ENCODE measurements at regions of chr18 and their contacts with region 1.

Region 1: DNA sequence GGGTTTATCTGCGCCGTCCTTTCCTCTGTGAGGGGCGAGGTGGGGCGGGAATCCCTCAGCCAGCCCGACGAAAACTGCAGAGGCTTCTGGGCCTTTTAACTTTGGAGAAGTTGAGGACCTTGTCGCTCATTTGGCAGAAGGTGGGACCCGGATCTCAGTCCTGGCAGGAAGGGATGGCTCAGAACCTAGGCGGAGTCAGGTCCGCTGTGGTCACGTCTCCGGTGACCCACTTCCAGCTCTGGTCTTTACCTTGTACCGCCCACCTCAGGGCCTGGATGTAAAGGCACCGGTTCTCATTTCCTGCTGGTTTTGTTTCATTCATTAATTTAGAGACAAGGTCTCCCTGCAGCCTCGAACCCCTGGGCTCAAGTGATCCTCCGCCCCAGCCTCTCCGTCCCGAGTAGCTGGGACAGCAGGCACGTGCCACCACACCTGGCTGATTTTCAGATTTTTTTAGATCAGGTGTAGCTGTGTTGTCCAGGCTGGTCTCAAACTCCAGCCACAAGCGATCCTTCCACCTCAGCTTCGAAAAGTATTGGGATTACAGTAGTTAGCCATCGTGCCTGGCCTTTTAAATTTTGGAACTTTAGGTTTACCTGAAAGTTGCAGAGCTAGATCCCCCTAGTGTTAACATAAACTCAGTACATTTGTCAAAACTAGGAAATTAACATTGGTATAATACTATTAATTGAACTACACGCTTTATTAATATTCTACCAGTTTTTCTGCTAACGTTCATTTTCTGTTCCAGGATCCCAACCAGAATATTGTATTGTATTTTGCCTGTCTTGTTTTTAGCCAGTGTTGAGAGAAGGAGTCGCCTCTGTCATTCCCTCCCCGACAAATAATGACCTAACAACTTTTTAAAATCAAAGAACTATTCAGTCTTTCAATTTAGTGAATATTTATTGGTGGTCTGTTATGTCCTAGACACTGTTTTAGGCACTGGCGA is 852 bp downstream of the POLI start:
- DNase-seq: no peak
- ATAC-seq: peak; percentile 27
- H3K4me3 Mint-ChIP-seq: peak overlapping the region; percentile 95
- H3K27ac Mint-ChIP-seq: peak overlapping the region; percentile 99
- H3K4me1 Mint-ChIP-seq: peaks cover 31% of the 10 kb centered on the region
- H3K27me3 Mint-ChIP-seq: no peaks in the 10 kb centered on the region
- CTCF ChIP-seq: peak; percentile 46

Region 2: GRCh38 chr18:54119524-54120019 is 150.6 kb before region 1 on chr18:
- CTCF ChIA-PET with region 1: interaction called, 11 read pairs
- POLR2A ChIA-PET with region 1: interaction called, 4 read pairs
- intact Hi-C with region 1: loop called (anchors 1 kb)
- DNase-seq: no peak
- ATAC-seq: peak; percentile 37
- H3K4me3 Mint-ChIP-seq: peak overlapping the region; percentile 65
- H3K27ac Mint-ChIP-seq: no peak overlapping the region
- H3K4me1 Mint-ChIP-seq: peaks cover 4% of the 10 kb centered on the region
- H3K27me3 Mint-ChIP-seq: peaks cover 17% of the 10 kb centered on the region
- CTCF ChIP-seq: peak; percentile 62

Region 3: GRCh38 chr18:54173980-54174630 is 96.1 kb before region 1 on chr18:
- CTCF ChIA-PET with region 1: interaction called, 5 read pairs
- POLR2A ChIA-PET with region 1: interaction called, 3 read pairs
- intact Hi-C with region 1: loop called (anchors 1 kb)
- DNase-seq: no peak
- ATAC-seq: no peak
- H3K4me3 Mint-ChIP-seq: no peak overlapping the region
- H3K27ac Mint-ChIP-seq: no peak overlapping the region
- H3K4me1 Mint-ChIP-seq: peaks cover 19% of the 10 kb centered on the region
- H3K27me3 Mint-ChIP-seq: no peaks in the 10 kb centered on the region
- CTCF ChIP-seq: no peak

Region 4: GRCh38 chr18:54232485-54233227 is 37.5 kb before region 1 on chr18:
- CTCF ChIA-PET with region 1: interaction called, 4 read pairs
- POLR2A ChIA-PET with region 1: interaction called, 74 read pairs
- intact Hi-C with region 1: no loop called
- DNase-seq: no peak
- ATAC-seq: no peak
- H3K4me3 Mint-ChIP-seq: no peak overlapping the region
- H3K27ac Mint-ChIP-seq: no peak overlapping the region
- H3K4me1 Mint-ChIP-seq: no peaks in the 10 kb centered on the region
- H3K27me3 Mint-ChIP-seq: no peaks in the 10 kb centered on the region
- CTCF ChIP-seq: no peak

Region 5: DNA sequence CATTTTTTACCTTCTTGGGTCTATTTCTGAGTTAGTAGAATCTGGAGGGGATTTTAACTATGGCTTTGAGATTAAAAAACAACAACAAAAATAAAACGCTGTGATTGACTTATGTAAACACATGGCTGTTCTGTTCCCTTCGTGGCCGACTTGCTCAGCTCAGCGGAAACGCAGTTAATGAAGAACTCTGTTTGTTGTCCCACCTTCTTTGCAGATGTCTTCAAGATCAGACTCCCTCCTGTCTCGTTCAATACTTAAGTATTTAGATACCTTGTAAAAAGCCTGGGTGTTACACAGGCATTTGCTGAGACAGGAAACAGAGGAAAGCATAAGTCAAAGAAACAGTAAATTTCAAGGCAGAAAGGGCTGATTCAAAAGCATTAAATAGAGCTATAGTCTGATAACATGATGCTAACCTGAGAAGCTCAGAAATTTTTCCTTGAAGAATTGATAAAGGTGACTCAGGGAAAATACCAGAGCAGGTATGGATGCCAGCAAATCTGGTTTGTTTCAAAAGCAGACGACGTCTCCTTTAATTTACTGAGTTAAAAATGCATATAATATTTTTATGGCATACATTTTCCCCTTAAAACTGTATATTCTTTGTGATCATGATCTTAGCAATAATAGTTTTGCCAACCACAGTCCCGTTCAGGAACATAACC is 22.5 kb before region 1 on chr18:
- CTCF ChIA-PET with region 1: interaction called, 5 read pairs
- POLR2A ChIA-PET with region 1: interaction called, 58 read pairs
- intact Hi-C with region 1: loop called (anchors 1 kb)
- DNase-seq: no peak
- ATAC-seq: no peak
- H3K4me3 Mint-ChIP-seq: no peak overlapping the region
- H3K27ac Mint-ChIP-seq: peak overlapping the region; percentile 87
- H3K4me1 Mint-ChIP-seq: peaks cover 45% of the 10 kb centered on the region
- H3K27me3 Mint-ChIP-seq: no peaks in the 10 kb centered on the region
- CTCF ChIP-seq: no peak

Region 6: DNA sequence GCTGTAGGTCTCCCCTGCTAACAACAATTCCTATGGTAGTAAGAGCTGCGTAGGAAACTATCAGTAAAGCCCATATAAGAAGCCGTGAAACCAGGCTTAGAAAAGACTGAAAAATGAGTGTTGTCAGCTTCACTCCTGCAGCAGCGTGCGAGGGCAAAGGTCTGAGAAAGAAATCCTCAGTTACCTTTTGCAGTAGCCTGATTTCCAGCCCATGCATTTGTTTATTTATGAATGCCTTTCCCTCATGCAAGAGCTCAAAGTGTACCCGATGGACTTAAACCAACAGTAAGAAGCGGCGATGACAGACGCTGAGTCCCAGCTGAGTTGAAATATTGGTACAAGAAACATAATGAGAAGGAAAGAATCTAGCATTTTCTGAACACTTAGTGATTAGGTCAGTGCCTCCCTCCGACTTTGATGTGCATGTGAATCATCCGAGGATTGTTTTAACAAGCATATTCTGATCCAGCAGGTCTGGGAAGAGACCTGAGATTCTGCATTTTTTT is 15.9 kb before region 1 on chr18:
- CTCF ChIA-PET with region 1: interaction called, 5 read pairs
- POLR2A ChIA-PET with region 1: interaction called, 58 read pairs
- intact Hi-C with region 1: loop called (anchors 1 kb)
- DNase-seq: no peak
- ATAC-seq: no peak
- H3K4me3 Mint-ChIP-seq: no peak overlapping the region
- H3K27ac Mint-ChIP-seq: no peak overlapping the region
- H3K4me1 Mint-ChIP-seq: peaks cover 36% of the 10 kb centered on the region
- H3K27me3 Mint-ChIP-seq: no peaks in the 10 kb centered on the region
- CTCF ChIP-seq: no peak

Region 7: DNA sequence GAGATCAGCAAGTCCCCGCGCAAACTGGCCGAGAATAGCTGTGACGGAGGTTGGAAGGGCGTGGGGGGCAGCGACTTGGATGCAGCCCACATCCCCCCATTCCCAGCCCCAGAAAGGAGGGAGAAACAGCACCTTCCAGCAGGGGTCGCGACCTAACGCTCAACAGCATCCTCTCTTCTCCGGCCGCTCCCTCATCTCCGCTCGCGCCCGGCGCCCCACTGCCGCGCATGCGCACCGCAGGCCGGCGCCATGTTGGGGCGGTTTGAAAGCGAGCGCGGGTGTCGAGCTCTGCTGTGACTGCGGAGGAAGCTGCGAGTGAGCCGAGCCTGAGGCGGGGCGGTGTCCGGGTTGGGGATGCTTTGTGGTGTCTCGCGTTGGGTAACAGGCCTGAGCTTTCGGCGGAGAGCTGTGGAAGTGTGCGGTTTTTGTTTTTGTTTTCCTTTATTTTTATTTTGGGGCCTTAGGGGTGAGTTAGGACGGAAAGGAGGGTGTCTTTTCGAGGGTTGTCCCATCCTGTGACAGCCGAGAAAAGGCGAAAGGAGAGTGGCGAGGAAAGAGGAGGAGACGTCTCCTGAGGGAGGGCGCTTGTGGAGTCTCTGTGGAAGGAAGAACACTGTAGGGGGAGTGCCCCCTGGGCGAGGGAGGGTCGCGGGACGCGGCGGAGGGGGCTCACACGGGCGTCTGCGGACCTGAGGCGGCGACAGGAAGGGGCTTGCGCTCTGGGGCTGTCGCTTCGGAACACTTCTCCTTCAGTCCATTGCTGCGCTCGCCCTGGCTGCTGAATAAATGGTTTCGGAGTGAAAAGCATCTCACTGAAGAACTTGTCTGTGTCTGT is 87.7 kb after region 1 on chr18 and contains the starts of genes C18orf54 and STARD6:
- CTCF ChIA-PET with region 1: interaction called, 15 read pairs
- POLR2A ChIA-PET with region 1: interaction called, 4 read pairs
- intact Hi-C with region 1: loop called (anchors 1 kb)
- DNase-seq: peak; percentile 89
- ATAC-seq: peak; percentile 95
- H3K4me3 Mint-ChIP-seq: peak within 1 kb of the TSS; percentile 99
- H3K27ac Mint-ChIP-seq: peak within 1 kb of the TSS; percentile 93
- H3K4me1 Mint-ChIP-seq: peaks cover 15% of the 10 kb centered on the region
- H3K27me3 Mint-ChIP-seq: no peaks in the 10 kb centered on the region
- CTCF ChIP-seq: no peak
- total RNA-seq, gene C18orf54: 1.9 TPM in 2 replicates
- total RNA-seq, gene STARD6: not detected in 2 replicates

Measured in activated B cell treated with CpG ODN at 0.5 μM for 24 hours (primary cell).